ENCODE measurements at regions of chr17 and their contacts with region 1.

Region 1: DNA sequence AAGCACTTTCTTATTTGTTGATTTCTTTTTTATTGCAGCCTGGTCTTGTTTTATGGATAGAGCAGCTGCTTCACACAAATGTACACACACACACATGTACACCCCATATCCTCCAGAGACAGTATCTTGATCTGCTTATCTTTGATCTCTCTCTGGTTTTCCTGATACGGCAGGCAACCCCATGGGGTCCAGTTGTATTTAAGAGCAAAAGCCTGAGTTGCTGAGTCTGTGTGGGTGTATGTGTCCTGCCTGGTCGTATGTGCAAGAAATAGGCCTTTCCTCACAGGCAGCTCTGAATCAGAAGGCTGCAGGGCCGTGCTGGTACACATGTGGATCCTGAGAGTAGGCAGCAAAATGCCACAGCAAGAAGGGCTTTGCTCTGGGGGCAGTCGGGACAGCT is 14.6 kb upstream of the LGALS9 start:
- DNase-seq: no peak
- ATAC-seq: no peak
- H3K4me3 ChIP-seq: no peak overlapping the region
- H3K4me3 Mint-ChIP-seq: peak overlapping the region in 1 of 10 donors; percentile 69
- H3K27ac ChIP-seq: no peak overlapping the region
- H3K27ac Mint-ChIP-seq: peak overlapping the region in 5 of 9 donors; percentile 22 to 84 (median 48)
- H3K4me1 ChIP-seq: peaks cover 0 to 5% of the 10 kb centered on the region in 2 donors
- H3K4me1 Mint-ChIP-seq: peaks cover 0 to 55% (median 8%) of the 10 kb centered on the region in 7 donors
- H3K27me3 ChIP-seq: no peaks in the 10 kb centered on the region
- H3K27me3 Mint-ChIP-seq: no peaks in the 10 kb centered on the region

Region 2: DNA sequence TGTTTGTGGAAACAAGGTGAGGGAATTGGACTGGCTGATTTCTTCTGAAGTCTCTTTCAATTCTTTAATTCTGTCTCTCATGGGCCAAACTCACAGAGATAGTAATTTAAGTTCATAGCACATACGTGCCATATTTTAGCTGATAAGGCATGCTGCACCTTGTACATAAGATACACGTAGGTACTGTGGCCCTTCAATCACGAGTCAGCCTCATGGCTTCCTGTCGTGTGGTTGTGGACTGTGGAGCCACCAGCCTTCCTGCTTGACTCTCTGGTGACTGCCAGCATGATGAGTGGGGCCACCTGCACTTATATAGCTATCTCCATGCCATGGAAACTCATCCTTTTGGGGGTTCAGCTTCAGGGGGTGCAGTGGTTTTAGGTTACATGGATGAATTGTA is 135.1 kb before region 1 on chr17:
- CTCF ChIA-PET with region 1: no interaction called
- POLR2A ChIA-PET with region 1: no interaction called
- intact Hi-C with region 1: no loop called
- DNase-seq: peak in 6 of 9 donors; percentile 37 to 52 (median 47)
- ATAC-seq: peak; percentile 91
- H3K4me3 ChIP-seq: no peak overlapping the region
- H3K4me3 Mint-ChIP-seq: peak overlapping the region in 6 of 10 donors; percentile 12 to 79 (median 39)
- H3K27ac ChIP-seq: no peak overlapping the region
- H3K27ac Mint-ChIP-seq: peak overlapping the region in 7 of 9 donors; percentile 27 to 96 (median 63)
- H3K4me1 ChIP-seq: peaks cover 10 to 16% of the 10 kb centered on the region in 2 donors
- H3K4me1 Mint-ChIP-seq: peaks cover 21 to 87% (median 46%) of the 10 kb centered on the region in 7 donors
- H3K27me3 ChIP-seq: no peaks in the 10 kb centered on the region
- H3K27me3 Mint-ChIP-seq: no peaks in the 10 kb centered on the region

Region 3: GRCh38 chr17:27593857-27594255 is 22.6 kb before region 1 on chr17:
- CTCF ChIA-PET with region 1: no interaction called
- POLR2A ChIA-PET with region 1: no interaction called
- intact Hi-C with region 1: no loop called
- DNase-seq: no peak
- ATAC-seq: no peak
- H3K4me3 ChIP-seq: no peak overlapping the region
- H3K4me3 Mint-ChIP-seq: no peak overlapping the region
- H3K27ac ChIP-seq: no peak overlapping the region
- H3K27ac Mint-ChIP-seq: no peak overlapping the region
- H3K4me1 ChIP-seq: no peaks in the 10 kb centered on the region
- H3K4me1 Mint-ChIP-seq: peaks cover 0 to 20% (median 0%) of the 10 kb centered on the region in 7 donors
- H3K27me3 ChIP-seq: no peaks in the 10 kb centered on the region
- H3K27me3 Mint-ChIP-seq: no peaks in the 10 kb centered on the region

Region 4: GRCh38 chr17:27630607-27631410 is 14.4 kb after region 1 on chr17 and contains the start of gene LGALS9:
- CTCF ChIA-PET with region 1: no interaction called
- POLR2A ChIA-PET with region 1: interaction called, 3 read pairs
- intact Hi-C with region 1: loop called in 1 of 2 experiments (anchors 2 kb)
- DNase-seq: peak in 8 of 9 donors; percentile 23 to 55 (median 46)
- ATAC-seq: peak; percentile 74
- H3K4me3 ChIP-seq: peak within 1 kb of the TSS; percentile 91
- H3K4me3 Mint-ChIP-seq: peak within 1 kb of the TSS; percentile 88 to 96 (median 93)
- H3K27ac ChIP-seq: peak within 1 kb of the TSS; percentile 69
- H3K27ac Mint-ChIP-seq: peak within 1 kb of the TSS; percentile 84 to 98 (median 92)
- H3K4me1 ChIP-seq: peaks cover 13 to 18% of the 10 kb centered on the region in 2 donors
- H3K4me1 Mint-ChIP-seq: peaks cover 36 to 56% (median 53%) of the 10 kb centered on the region in 7 donors
- H3K27me3 ChIP-seq: no peaks in the 10 kb centered on the region
- H3K27me3 Mint-ChIP-seq: no peaks in the 10 kb centered on the region
- total RNA-seq, gene LGALS9: 11.0 to 198 (median 47.7) TPM

Region 5: DNA sequence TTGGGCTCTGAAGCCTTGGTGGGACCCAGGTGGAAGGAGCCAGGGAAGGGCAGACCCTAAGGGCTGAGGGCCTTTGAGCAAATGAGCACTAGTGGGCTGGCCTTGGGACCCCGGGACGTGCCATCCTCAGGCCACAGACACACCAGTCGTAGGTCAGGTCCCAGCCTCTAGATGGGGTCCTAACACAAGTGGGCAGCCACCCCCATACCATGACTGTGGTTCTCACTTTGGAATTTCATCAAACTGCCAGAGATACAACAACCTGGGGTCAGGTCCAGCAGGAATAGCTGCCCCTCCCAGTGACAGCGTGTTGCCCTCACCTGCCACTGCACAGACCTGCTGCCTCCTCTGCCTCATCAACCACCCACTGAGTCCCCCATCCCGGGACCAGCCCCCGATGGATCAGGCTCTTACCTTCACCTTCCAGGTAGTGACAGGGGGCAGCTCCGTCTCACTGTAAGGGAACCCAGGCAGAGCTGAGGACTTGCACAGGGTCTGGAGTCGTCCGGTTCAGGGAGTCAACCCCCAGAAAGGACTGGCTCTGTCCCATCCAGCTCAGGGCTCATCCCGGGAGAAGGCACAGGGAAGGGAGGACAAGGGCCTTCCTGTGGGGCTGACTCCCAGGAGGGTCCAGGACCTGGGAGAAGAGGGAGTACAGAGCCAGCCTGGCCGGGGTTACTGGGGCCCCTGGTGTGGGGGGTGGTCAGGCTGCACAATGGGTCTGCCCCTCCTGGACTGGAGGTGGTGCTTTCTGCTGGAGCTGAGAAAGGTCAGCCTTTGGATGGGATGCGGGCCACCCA is 54.6 kb after region 1 on chr17:
- CTCF ChIA-PET with region 1: no interaction called
- POLR2A ChIA-PET with region 1: no interaction called
- intact Hi-C with region 1: no loop called
- DNase-seq: no peak
- ATAC-seq: no peak
- H3K4me3 ChIP-seq: no peak overlapping the region
- H3K4me3 Mint-ChIP-seq: no peak overlapping the region
- H3K27ac ChIP-seq: no peak overlapping the region
- H3K27ac Mint-ChIP-seq: no peak overlapping the region
- H3K4me1 ChIP-seq: no peaks in the 10 kb centered on the region
- H3K4me1 Mint-ChIP-seq: peaks cover 0 to 5% (median 0%) of the 10 kb centered on the region in 7 donors
- H3K27me3 ChIP-seq: no peaks in the 10 kb centered on the region
- H3K27me3 Mint-ChIP-seq: peaks cover 0 to 3% (median 0%) of the 10 kb centered on the region in 5 donors

Measured in naive thymus-derived CD4-positive, alpha-beta T cell (primary cell).